ENCODE measurements at regions of chr3 and their contacts with region 1.

Region 1: DNA sequence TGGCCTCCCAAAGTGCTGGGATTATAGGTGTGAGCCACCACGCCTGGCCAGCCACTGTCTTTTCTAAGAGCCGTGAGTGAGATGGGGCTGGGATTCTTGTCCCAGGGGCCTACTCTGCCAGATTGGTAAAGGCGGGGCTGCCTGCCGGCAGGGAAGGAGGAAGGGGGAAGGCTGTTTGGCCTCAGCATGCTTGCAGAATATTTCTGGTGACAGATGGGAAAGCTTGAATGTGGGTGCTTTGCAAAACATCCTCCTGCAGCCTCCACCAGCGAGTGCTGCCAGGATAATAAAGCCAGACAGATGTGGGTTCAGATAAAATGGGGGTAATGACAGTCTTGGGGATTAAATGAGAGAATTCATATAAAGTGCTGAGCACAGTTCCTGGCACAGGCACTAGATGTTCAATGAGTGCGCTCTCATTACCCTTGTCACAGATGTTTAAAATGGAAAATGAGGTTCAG is 19.8 kb upstream of the ACOX2 start:
- DNase-seq: no peak
- H3K4me3 Mint-ChIP-seq: no peak overlapping the region
- H3K27ac Mint-ChIP-seq: no peak overlapping the region
- H3K4me1 Mint-ChIP-seq: no peaks in the 10 kb centered on the region
- H3K27me3 Mint-ChIP-seq: peaks cover 4% of the 10 kb centered on the region

Region 2: DNA sequence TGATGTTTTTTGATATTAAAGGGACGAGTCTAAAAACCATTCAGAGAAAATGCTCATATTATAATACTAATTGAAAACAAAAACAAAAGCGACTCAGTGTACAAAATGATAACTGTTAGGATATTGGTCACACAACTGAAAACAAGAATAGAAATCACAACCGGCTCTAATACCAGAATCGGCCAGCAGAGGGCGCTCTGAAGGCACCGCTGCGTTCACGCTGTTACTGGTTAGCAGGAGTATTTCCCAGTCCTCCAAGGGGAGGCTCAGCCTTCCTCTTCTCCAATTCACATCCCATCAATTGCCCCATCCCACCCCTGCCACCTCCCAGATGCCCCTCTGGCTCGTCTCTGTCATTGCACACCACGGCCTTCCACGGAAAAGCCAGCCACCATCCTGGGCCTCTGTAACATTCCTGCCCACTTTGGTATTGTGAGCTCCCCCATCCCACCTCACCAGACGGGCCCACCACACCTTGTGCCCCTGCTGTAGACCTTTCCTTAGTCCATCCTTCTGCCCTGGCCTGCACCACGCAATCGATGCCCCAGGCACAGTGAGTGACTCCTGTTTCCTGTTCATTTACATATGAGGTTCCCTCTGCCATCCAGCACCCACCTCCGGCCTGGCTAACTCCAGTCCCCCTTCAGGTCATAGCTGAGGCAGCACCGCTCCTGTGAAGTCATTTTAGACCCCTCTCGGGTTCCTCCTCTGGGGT is 11.9 kb after region 1 on chr3:
- CTCF ChIA-PET with region 1: interaction called, 33 read pairs
- DNase-seq: peak; percentile 81
- H3K4me3 Mint-ChIP-seq: no peak overlapping the region
- H3K27ac Mint-ChIP-seq: no peak overlapping the region
- H3K4me1 Mint-ChIP-seq: no peaks in the 10 kb centered on the region
- H3K27me3 Mint-ChIP-seq: peaks cover 12% of the 10 kb centered on the region